ENCODE measurements at regions of chr7 and their contacts with region 1.

Region 1: DNA sequence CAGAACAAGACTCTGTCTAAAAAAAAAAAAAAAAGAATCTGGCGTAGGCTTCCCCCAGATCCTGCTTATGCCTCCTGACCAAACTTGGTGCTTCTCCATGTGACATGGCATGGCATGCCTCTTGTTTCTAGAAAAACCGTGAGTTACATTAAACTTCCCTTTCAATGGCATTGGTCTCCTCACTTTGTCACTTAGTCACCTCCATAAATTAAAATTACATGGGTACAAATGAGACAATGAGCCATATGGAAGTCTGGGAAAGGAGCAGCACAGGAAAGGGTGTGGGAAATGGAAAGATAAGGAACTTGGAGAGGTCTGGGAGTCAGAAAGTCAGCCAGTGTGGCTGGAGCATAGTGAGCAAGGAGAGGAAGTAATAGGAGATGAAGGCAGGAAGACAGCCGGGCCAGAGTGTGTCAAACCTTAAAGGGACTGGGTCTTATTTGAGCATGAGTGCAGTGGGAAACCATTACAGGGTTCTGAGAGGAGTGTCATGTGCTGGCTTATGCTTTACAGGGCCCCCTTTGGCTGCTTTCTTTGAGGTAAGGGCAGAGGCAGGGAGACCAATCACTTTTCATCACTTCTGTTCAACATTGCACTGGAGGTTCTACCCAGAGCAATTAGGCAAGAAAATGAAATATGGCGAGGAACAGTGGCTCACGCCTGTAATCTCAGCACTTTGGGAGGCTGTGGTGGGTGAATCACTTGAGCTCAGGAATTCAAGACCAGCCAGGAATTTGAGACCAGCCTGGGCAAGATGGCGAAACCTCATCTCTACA is 21.3 kb upstream of the ZMIZ2 start:
- DNase-seq: peak; percentile 62
- H3K4me3 ChIP-seq: no peak overlapping the region
- H3K27me3 ChIP-seq: no peaks in the 10 kb centered on the region
- CTCF ChIP-seq: no peak

Region 2: DNA sequence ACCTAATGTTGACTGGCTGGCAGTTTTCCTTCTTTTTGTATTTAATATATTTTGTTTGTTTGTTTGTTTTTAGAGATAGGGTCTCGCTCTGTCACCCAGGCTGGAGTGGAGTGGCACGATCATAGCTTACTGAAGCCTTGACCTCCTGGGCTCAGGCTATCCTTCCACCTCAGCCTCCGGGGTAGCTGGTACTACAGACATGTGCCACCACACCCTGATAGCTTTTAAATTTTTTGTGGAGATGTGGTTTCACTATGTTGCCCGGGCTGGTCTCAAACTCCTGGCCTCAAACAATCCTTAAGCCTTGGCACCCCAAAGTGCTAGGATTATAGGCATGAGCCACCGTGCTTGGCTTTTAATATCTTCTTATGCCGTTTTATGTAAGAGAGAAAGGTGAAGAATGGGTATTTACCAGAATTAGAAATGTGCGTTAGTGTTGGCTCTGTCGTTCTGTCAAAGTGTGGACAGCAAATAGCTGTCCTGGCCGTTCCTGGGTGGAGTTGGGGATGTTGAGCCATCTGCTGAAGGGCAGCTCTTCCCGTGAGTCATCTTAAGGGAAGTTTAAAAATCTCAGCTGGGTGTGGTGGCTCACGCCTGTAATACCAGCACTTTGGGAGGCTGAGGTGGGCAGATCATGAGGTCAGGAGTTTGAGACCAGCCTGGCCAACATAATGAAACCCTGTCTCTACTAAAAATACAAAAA is 106.2 kb before region 1 on chr7:
- CTCF ChIA-PET with region 1: no interaction called
- POLR2A ChIA-PET with region 1: interaction called, 12 read pairs
- DNase-seq: no peak
- H3K4me3 ChIP-seq: no peak overlapping the region
- H3K27me3 ChIP-seq: no peaks in the 10 kb centered on the region
- CTCF ChIP-seq: no peak

Region 3: DNA sequence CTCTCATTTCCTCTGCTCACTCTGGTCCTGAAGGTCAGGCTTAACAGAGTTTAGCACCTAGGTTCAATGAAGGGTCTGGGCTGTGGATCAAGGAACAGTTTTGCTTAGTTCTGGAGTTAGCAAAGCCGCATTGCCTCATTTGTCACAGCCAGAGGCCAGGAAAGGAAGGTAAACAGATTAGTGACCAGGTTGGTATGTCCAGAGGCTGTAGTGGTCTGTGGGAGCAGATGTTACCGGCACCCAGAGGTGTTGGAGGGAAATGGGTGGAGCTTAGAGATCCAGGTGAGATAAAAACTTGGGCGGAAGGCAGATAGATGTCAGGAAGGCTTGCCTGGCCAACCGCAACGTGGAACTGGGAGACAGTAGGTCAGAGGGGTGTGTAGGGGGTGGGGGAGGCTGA is 15.3 kb before region 1 on chr7:
- CTCF ChIA-PET with region 1: no interaction called
- POLR2A ChIA-PET with region 1: no interaction called
- DNase-seq: no peak
- H3K4me3 ChIP-seq: no peak overlapping the region
- H3K27me3 ChIP-seq: no peaks in the 10 kb centered on the region
- CTCF ChIP-seq: no peak

Region 4: DNA sequence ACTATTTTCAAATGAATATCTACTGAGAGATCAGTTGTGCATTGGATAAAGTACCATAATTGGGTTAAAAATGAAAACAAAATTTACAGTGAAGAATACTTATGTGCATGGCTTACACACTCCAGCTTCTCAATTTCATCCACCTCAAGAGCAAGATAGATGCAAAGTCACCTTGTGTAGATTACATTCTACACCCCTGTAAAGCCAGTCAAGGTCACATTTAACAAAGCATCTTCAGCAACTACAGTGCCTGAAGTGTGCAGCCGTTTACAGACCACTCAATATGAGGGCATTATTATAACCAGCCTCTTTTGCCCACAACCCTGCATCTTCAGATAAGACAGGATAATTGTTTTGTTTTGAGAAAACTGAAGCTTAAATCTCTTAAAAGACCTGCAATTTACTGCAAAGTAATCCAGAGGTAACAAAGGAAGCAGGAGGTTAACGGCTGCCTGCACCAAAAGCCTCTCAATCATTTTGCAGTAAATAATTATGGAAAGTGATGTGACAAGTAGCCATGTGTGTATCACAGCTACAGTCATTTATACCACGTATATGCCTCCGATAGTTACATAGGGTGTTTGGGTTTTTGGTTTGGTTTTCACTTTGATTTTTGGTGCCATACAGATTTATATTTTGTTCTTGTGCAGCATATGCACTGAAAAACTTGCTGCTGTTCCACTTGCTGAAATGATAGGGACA is 153.1 kb after region 1 on chr7:
- CTCF ChIA-PET with region 1: no interaction called
- POLR2A ChIA-PET with region 1: no interaction called
- DNase-seq: no peak
- H3K4me3 ChIP-seq: peak overlapping the region; percentile 11
- H3K27me3 ChIP-seq: no peaks in the 10 kb centered on the region
- CTCF ChIP-seq: no peak

Measured in BJ (cell line).